Posterior cingulate gyrus (tissue), 11 donors: ENCODE measurements at regions of chr4 and their contacts with region 1.

Region 1: GRCh38 chr4:159102622-159103383 is at the start of gene RAPGEF2:
- DNase-seq: peak; percentile 84 to 99 (median 91)

Region 2: GRCh38 chr4:158219623-158220022 is 883.2 kb before region 1 on chr4:
- intact Hi-C with region 1: no loop called
- DNase-seq: no peak

Region 3: GRCh38 chr4:158768555-158769174 is 334.1 kb before region 1 on chr4 and contains the start of gene FNIP2:
- intact Hi-C with region 1: loop called (anchors 2 kb)
- DNase-seq: peak; percentile 67 to 98 (median 85)

Region 4: DNA sequence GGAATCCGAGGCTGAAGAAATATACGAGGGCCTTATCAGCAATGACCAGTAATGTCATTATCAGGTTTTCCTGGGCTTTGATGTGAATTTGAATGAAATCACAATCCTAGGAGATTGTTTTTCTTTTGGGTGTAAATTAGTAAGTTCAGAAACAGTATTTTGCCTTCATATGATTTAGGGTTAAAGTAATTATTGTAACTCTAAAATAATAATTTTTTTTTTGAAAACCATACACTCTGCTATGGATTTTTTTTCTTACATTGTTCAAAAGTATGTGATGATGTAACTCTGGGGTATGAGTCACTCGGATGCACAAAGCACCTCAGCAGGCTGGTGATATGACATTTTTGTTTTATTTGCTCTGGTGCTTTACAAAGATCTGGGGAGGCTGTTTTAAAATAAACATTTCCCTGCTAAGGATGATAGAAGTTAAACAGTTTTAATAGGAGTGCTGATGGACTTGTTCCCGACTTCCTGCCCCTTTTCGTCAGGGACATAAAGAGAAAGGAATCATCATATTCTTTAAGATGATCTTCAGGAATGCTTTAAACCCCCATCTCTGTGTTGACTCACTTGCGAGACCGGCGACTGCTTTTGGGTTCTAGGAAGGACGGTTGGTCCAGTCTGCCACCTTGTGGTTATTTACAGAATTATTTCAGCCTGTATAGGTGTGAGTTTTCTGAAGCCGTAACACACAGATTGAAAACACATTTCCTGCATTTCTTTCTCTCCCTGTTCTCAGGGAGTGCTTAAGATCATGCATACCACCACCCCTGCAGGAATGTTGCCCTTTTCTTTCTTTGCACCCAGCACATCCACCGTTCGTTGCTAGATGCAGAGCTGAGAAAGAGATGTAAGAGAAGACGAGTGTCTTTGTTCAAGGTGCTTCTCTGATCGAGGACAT is 72.5 kb after region 1 on chr4:
- intact Hi-C with region 1: loop called (anchors 5 kb)
- DNase-seq: peak in 9 of 10 donors; percentile 35 to 92 (median 64)